H1 (cell line): ENCODE measurements at regions of chr14 and their contacts with region 1.

Region 1: GRCh38 chr14:56816574-56817391 is 6.5 kb upstream of the OTX2 start:
- DNase-seq: peak in 1 of 2 experiments; percentile 77
- H3K4me3 ChIP-seq: peak overlapping the region; percentile 37 to 58 (median 42)
- H3K27ac ChIP-seq: no peak overlapping the region
- H3K4me1 ChIP-seq: peaks cover 13 to 38% (median 22%) of the 10 kb centered on the region in 4 experiments
- H3K27me3 ChIP-seq: peaks cover 35 to 79% (median 62%) of the 10 kb centered on the region in 4 experiments
- CTCF ChIP-seq: peak; percentile 27 to 50 (median 33)
- EP300 ChIP-seq: no peak
- POLR2A ChIP-seq: no peak
- RAD21 ChIP-seq: peak in 1 of 2 experiments; percentile 55; a peak in 3 of 4 replicates

Region 2: DNA sequence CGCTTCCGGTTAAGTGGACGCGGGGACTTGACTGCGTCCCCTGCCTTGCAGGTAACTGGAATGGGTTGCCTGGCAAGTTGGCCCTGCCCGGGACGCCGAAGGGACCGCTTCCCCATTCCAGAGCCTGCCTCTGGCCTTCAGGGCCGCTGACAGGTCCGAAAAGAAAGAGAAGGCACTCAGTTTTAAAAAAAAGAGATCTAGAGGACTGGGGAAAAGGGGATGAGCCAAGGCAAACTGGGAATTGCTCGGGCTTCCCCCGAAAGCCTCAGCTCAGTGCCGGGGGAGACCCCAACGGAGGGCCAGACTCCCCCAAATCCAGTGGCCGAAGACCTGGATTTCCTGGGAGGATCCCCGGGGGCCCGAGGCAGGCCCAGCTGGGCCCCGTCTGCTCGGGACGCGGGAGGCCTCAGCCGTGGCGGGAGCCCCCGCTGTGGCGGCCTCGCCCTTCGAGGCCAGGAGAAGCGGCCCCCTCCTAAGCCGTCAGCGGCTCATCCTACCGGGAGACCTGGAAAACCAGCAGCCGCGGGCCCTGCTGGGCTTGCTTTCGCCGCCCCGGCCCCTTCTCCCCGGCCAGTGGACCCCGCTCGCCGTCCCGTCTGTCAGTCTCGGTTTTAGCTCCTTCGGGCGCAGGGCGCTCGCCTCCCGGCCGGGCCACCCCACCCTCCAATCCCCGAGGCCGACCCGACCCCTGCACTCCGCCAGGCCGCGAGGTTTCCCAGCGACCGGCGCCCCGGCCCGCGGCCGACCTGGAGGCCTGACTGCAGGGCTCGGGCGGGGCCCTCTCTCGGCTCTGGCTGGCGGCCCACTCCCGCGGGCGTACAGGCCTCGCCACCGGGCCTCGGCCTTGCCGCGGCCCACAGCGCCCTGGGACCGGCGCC is 19.0 kb before region 1 on chr14:
- CTCF ChIA-PET with region 1: interaction called, 19 read pairs
- POLR2A ChIA-PET with region 1: interaction called, 53 read pairs
- DNase-seq: peak in 1 of 2 experiments; percentile 79
- H3K4me3 ChIP-seq: peak overlapping the region; percentile 27 to 83 (median 49)
- H3K27ac ChIP-seq: no peak overlapping the region
- H3K4me1 ChIP-seq: peaks cover 18 to 31% (median 26%) of the 10 kb centered on the region in 4 experiments; a peak in 6 of 7 replicates
- H3K27me3 ChIP-seq: peaks cover 2 to 52% (median 43%) of the 10 kb centered on the region in 4 experiments
- CTCF ChIP-seq: no peak
- EP300 ChIP-seq: no peak
- POLR2A ChIP-seq: peak in 1 of 2 experiments; percentile 64; a peak in 1 of 3 replicates
- RAD21 ChIP-seq: no peak